GM13977 (cell line): ENCODE measurements at regions of chr6 and their contacts with region 1.

Region 1: DNA sequence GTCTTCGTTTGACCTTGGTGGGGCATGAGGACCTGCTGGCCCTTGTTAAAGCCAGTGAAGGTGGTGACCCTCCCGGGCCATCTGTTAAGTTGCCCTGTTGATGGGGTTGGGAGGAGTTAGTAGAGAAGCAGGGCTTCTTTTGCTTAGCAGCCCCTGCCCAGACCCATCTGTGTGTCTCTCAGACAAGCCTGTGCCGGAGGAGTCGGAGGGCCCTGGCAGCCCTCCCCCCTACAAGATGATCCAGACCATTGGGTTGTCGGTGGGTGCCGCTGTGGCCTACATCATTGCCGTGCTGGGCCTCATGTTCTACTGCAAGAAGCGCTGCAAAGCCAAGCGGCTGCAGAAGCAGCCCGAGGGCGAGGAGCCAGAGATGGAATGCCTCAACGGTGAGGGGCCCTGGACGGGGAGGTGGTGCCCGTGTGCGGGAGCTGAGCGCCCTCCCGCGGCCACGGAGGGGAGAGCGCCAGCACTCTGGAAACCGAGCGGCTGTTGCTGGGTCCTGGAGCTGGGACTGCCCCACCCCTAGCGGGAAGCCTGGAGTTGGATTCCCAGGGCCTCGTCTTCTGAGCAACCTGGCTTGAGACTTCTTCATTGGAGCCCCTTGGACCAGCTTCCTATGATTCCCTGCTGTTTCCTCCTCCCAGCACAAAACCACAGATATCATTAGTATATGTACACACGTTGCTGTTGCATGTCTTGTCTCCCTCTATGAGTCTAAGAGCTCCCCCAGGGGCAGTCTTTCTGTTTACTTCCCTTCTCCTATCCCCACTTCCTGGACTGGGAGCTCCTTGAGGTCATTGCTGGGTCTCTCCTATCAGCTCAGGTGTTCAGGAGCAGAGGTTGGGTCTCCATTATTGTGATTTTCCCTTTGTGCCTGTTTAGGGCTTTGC is 27.6 kb upstream of the SRF start:
- DNase-seq: peak; percentile 92
- CTCF ChIP-seq: peak; percentile 98

Region 2: DNA sequence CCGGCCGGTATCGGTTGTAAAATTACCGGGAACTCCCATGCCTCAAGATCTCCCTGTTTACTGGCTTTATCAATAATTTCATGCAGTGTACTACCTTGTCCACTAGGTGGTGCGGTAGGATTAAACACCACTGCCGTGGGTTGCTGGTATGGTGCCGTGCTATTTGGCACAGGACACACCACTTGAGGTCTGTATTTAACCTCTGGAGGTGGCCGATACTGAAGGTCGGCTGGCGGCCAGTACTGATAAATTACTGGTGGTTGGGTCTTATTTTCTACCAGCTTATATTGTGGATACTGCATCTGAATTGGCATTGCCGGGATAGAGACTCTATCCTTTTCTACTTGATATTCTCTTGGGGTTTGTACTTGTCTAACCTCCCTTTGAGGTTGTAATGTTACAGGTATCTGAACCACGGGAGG is 241.9 kb before region 1 on chr6:
- in situ Hi-C with region 1: loop called (anchors 10 kb)
- DNase-seq: peak; percentile 56
- CTCF ChIP-seq: peak; percentile 81